SK-MEL-5 (cell line): ENCODE measurements at regions of chr9 and their contacts with region 1.

Region 1: GRCh38 chr9:100066539-100066938 is 32.3 kb downstream of the ERP44 start:
- DNase-seq: peak; percentile 55

Region 2: GRCh38 chr9:99307851-99308250 is 758.7 kb before region 1 on chr9:
- in situ Hi-C with region 1: no loop called
- DNase-seq: no peak

Region 3: GRCh38 chr9:100598641-100599145 is 532.2 kb after region 1 on chr9:
- in situ Hi-C with region 1: loop called (anchors 25 kb)
- DNase-seq: peak; percentile 80